CD8-positive, alpha-beta T cell (primary cell): ENCODE measurements at regions of chr14 and their contacts with region 1.

Region 1: GRCh38 chr14:76812211-76813044 is at the start of gene ANGEL1:
- DNase-seq: peak; percentile 95 to 99 (median 98)
- ATAC-seq: peak; percentile 90
- H3K4me3 ChIP-seq: peak within 1 kb of the TSS; percentile 73 to 90
- H3K4me3 Mint-ChIP-seq: peak within 1 kb of the TSS; percentile 95
- H3K27ac ChIP-seq: peak within 1 kb of the TSS; percentile 61 to 91
- H3K27ac Mint-ChIP-seq: peak within 1 kb of the TSS; percentile 89
- H3K4me1 ChIP-seq: peaks cover 22% of the 10 kb centered on the region
- H3K4me1 Mint-ChIP-seq: peaks cover 33% of the 10 kb centered on the region
- H3K27me3 ChIP-seq: no peaks in the 10 kb centered on the region
- H3K27me3 Mint-ChIP-seq: no peaks in the 10 kb centered on the region
- CTCF ChIP-seq: no peak
- total RNA-seq, gene ANGEL1: 6.4 to 6.6 TPM

Region 2: DNA sequence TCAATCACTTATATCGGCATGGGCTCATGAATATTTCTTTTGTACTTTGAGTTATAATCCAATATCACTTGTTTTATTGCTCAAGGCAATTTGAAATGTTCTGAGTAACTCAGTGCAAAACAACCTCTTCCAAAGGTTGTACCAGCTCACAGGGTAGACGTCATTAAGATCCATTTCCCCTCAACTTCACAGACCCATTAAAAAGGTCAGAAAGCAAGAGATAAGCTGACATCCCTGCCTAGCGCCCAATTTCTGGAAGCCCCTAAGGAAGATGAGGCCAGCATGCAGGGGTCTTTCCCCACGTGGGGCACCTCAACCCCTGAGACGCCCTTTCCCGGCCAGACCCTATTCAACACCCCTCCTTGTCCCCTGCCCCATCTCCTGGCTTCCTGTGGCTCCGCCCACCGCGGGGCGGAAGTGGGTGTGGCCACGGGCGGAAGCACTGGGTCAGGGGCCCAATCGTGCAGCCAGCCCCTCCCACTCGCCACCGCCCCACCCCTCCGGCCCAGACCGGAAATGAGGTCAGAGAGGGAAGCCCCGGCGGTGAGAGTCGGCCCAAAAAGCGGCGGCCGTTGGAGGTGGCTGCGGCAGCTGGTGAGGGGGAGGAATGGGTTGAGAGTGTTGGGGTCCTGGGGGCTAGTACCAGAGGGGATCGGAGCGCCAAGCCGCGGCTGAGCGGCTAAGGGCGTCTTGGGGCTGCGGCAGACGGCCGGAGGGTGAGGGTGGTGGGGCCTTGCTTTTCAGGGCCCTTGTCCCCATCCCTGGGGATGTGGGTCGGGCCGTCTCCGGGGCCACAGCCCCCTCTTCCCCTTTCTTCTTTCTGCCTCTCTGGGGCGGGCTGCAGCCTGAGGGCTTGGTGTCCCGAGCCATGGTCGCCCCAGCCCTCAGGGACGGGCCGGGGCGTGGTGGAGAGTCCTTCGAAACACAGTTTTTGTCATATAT is 660.8 kb before region 1 on chr14 and contains the start of gene GPATCH2L:
- CTCF ChIA-PET with region 1: no interaction called
- POLR2A ChIA-PET with region 1: no interaction called
- intact Hi-C with region 1: loop called in 1 of 2 experiments (anchors 10 kb)
- DNase-seq: peak; percentile 95 to 98 (median 97)
- ATAC-seq: peak; percentile 87
- H3K4me3 ChIP-seq: peak within 1 kb of the TSS; percentile 86 to 99
- H3K4me3 Mint-ChIP-seq: peak within 1 kb of the TSS; percentile 93
- H3K27ac ChIP-seq: peak within 1 kb of the TSS; percentile 85 to 98
- H3K27ac Mint-ChIP-seq: peak within 1 kb of the TSS; percentile 95
- H3K4me1 ChIP-seq: peaks cover 47% of the 10 kb centered on the region
- H3K4me1 Mint-ChIP-seq: peaks cover 54% of the 10 kb centered on the region
- H3K27me3 ChIP-seq: no peaks in the 10 kb centered on the region
- H3K27me3 Mint-ChIP-seq: no peaks in the 10 kb centered on the region
- CTCF ChIP-seq: no peak
- total RNA-seq, gene GPATCH2L: 74.4 to 78.1 TPM

Region 3: GRCh38 chr14:76827696-76828296 is 15.4 kb after region 1 on chr14:
- CTCF ChIA-PET with region 1: no interaction called
- POLR2A ChIA-PET with region 1: no interaction called
- intact Hi-C with region 1: no loop called
- DNase-seq: no peak
- ATAC-seq: no peak
- H3K4me3 ChIP-seq: no peak overlapping the region
- H3K4me3 Mint-ChIP-seq: no peak overlapping the region
- H3K27ac ChIP-seq: no peak overlapping the region
- H3K27ac Mint-ChIP-seq: no peak overlapping the region
- H3K4me1 ChIP-seq: no peaks in the 10 kb centered on the region
- H3K4me1 Mint-ChIP-seq: no peaks in the 10 kb centered on the region
- H3K27me3 ChIP-seq: no peaks in the 10 kb centered on the region
- H3K27me3 Mint-ChIP-seq: no peaks in the 10 kb centered on the region
- CTCF ChIP-seq: no peak

Region 4: GRCh38 chr14:76904740-76905438 is 92.5 kb after region 1 on chr14:
- CTCF ChIA-PET with region 1: no interaction called
- POLR2A ChIA-PET with region 1: no interaction called
- intact Hi-C with region 1: loop called in 1 of 2 experiments (anchors 5 kb)
- DNase-seq: peak; percentile 38 to 85 (median 77)
- ATAC-seq: peak; percentile 84
- H3K4me3 ChIP-seq: peak overlapping the region in 1 of 2 experiments; percentile 3
- H3K4me3 Mint-ChIP-seq: peak overlapping the region; percentile 61
- H3K27ac ChIP-seq: no peak overlapping the region
- H3K27ac Mint-ChIP-seq: peak overlapping the region; percentile 68
- H3K4me1 ChIP-seq: peaks cover 28% of the 10 kb centered on the region
- H3K4me1 Mint-ChIP-seq: peaks cover 23% of the 10 kb centered on the region
- H3K27me3 ChIP-seq: no peaks in the 10 kb centered on the region
- H3K27me3 Mint-ChIP-seq: no peaks in the 10 kb centered on the region
- CTCF ChIP-seq: no peak

Region 5: GRCh38 chr14:77040059-77040740 is 227.8 kb after region 1 on chr14:
- CTCF ChIA-PET with region 1: no interaction called
- POLR2A ChIA-PET with region 1: no interaction called
- intact Hi-C with region 1: loop called in 1 of 2 experiments (anchors 1 kb)
- DNase-seq: peak; percentile 94 to 100 (median 99)
- ATAC-seq: peak; percentile 77
- H3K4me3 ChIP-seq: peak overlapping the region; percentile 42 to 47
- H3K4me3 Mint-ChIP-seq: peak overlapping the region; percentile 86
- H3K27ac ChIP-seq: peak overlapping the region; percentile 90 to 94
- H3K27ac Mint-ChIP-seq: peak overlapping the region; percentile 99
- H3K4me1 ChIP-seq: peaks cover 74% of the 10 kb centered on the region
- H3K4me1 Mint-ChIP-seq: peaks cover 90% of the 10 kb centered on the region
- H3K27me3 ChIP-seq: no peaks in the 10 kb centered on the region
- H3K27me3 Mint-ChIP-seq: no peaks in the 10 kb centered on the region
- CTCF ChIP-seq: no peak

Region 6: DNA sequence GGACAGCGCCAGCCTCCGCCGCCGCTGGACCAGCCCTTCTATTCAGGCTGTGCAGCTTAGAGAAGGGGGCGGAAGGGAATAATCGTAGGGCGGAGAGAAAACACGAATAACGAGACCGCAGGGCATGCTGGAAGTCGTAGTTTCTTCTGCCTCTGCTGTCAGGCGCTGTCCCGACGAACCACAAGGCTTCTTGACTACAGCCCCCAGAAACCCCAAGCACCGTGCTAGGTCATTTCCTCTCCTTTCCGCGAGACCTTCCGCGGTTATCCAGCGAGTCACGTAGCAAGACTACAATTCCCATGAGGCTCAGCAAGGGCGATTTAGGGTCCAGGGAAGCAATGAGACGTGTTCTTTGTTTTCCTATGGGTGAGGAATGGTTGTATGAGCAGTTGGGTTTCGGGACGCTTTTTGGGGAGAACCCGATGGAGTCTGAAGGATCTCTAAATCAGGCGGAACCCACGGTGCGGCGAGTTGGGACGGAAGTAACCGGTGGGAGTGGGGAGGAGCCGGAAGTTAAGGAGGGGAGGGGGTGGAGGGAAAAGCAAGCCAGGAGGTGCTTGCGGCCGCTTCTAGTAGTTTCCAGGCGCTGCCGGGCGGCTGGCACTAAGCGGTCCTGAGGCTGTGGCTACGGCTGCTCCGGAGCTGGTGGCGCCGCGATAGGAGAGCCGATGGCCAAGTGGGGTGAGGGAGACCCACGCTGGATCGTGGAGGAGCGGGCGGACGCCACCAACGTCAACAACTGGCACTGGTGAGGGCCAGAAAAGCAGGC is 645.3 kb after region 1 on chr14 and contains the starts of genes AHSA1 and VIPAS39:
- CTCF ChIA-PET with region 1: no interaction called
- POLR2A ChIA-PET with region 1: no interaction called
- intact Hi-C with region 1: loop called in 1 of 2 experiments (anchors 2 kb)
- DNase-seq: peak; percentile 84 to 99 (median 93)
- ATAC-seq: peak; percentile 94
- H3K4me3 ChIP-seq: peak within 1 kb of the TSS; percentile 95 to 99
- H3K4me3 Mint-ChIP-seq: peak within 1 kb of the TSS; percentile 100
- H3K27ac ChIP-seq: peak within 1 kb of the TSS; percentile 72 to 96
- H3K27ac Mint-ChIP-seq: peak within 1 kb of the TSS; percentile 99
- H3K4me1 ChIP-seq: peaks cover 24% of the 10 kb centered on the region
- H3K4me1 Mint-ChIP-seq: peaks cover 62% of the 10 kb centered on the region
- H3K27me3 ChIP-seq: no peaks in the 10 kb centered on the region
- H3K27me3 Mint-ChIP-seq: no peaks in the 10 kb centered on the region
- CTCF ChIP-seq: no peak
- total RNA-seq, gene AHSA1: 37.0 to 43.5 TPM
- total RNA-seq, gene VIPAS39: 7.2 to 8.1 TPM